Activated CD4-positive, alpha-beta T cell treated with anti-CD3 and anti-CD28 coated beads for 36 hours (primary cell): ENCODE measurements at regions of chr13 and their contacts with region 1.

Region 1: DNA sequence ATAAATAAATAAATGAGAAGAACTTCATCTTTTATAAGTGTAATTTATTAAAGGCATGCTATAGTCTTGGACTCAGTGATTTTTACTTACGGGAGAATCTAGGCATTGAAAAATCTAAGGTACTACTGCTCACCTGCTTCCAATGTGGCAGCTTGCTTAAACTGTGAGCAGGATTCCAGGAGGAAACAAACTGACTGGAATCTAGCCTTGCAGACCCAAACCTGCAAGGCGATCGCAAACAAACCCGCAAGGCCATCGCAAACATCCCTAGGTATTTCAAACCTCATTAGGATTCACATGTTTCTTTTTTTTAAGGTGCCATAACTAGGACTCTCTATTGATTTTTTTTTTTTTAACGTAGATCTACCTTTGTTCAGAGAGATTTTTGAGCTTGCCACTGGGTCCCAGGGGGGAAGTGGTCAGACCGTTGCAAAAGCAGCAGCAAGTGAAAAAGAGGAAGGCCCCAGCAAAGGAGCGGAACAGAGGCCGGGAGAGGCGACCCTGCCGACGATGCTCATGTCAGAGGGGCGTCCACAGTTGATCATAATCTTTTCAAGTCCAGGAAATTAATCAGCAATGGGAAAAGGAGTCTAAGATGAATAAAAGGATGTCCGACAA is 32.6 kb upstream of the FLT1 start:
- DNase-seq: no peak
- ATAC-seq: no peak
- H3K4me3 Mint-ChIP-seq: no peak overlapping the region
- H3K27ac Mint-ChIP-seq: no peak overlapping the region
- H3K4me1 Mint-ChIP-seq: peaks cover 25% of the 10 kb centered on the region
- H3K27me3 Mint-ChIP-seq: peaks cover 19% of the 10 kb centered on the region

Region 2: DNA sequence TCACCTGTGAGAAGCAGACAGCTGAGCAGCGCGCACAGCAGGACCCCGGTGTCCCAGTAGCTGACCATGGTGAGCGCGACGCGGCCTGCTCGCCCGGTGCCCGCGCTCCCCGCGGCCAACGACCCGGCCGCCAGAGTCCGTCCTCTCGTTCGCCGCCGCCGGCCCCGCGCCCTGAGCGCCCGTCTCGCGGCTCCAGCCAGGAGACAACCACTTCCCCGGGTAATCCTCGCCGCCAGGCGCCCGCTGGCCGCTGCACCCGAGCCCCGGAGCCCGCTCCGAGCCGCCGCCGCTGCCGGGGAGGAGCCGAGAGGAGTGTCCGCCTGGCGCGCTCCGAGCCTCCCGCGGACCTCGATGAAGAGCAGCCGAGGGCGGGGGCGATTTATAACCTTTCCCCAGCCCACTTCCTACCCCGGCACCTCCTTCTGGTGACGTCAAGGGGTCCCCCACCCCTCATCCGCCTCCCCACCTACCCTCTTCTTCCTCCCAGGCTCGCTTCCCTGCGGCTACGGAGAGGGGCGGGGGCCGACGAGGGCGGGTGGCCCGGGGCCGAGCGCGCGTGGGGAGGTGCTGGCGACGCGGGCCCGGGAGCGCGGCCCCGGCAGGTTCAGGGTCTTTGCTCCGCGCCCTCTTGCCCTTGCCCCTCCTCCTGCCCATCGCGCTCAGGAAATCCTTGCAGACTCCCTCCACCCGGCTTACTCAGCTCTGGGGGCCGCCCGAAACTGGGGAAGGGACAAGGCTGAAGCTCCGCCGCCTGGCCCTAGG is 32.6 kb before region 1 on chr13 and contains the start of gene FLT1:
- CTCF ChIA-PET with region 1: interaction called, 5 read pairs
- POLR2A ChIA-PET with region 1: no interaction called
- intact Hi-C with region 1: loop called (anchors 1 to 2 kb)
- DNase-seq: peak; percentile 69
- ATAC-seq: peak; percentile 55
- H3K4me3 Mint-ChIP-seq: peak within 1 kb of the TSS; percentile 76
- H3K27ac Mint-ChIP-seq: peak within 1 kb of the TSS; percentile 22
- H3K4me1 Mint-ChIP-seq: peaks cover 23% of the 10 kb centered on the region
- H3K27me3 Mint-ChIP-seq: peaks cover 35% of the 10 kb centered on the region
- total RNA-seq, gene FLT1: 21.7 to 27.4 TPM

Region 3: DNA sequence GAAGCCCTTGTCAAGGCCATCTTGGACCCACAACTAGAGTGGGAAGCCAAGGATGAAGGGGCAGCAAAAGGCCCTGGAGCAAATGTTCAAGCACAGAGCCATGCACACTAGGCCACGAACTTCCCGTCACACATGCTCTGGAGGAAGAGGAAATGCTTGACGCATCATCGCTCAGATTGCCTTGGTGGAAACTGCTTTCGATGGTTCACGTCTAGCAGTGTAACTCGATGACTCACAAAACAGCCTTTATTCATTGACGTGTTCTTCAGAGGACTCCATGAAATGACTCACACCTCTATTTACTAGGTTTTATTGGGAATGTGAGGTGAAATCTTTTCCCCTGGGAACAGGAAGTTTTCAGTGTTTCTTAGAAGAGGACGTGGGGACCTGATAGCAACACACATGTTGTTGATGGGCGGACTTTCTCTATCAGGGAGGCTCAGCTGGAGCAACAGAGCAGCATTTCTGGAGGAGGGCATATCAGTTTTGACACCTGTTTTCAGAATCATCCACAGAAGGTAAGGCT is 47.2 kb after region 1 on chr13:
- CTCF ChIA-PET with region 1: no interaction called
- POLR2A ChIA-PET with region 1: no interaction called
- intact Hi-C with region 1: loop called in 1 of 2 experiments (anchors 1 kb)
- DNase-seq: peak; percentile 69
- ATAC-seq: peak; percentile 98
- H3K4me3 Mint-ChIP-seq: no peak overlapping the region
- H3K27ac Mint-ChIP-seq: peak overlapping the region; percentile 90
- H3K4me1 Mint-ChIP-seq: peaks cover 15% of the 10 kb centered on the region
- H3K27me3 Mint-ChIP-seq: peaks cover 10% of the 10 kb centered on the region

Region 4: DNA sequence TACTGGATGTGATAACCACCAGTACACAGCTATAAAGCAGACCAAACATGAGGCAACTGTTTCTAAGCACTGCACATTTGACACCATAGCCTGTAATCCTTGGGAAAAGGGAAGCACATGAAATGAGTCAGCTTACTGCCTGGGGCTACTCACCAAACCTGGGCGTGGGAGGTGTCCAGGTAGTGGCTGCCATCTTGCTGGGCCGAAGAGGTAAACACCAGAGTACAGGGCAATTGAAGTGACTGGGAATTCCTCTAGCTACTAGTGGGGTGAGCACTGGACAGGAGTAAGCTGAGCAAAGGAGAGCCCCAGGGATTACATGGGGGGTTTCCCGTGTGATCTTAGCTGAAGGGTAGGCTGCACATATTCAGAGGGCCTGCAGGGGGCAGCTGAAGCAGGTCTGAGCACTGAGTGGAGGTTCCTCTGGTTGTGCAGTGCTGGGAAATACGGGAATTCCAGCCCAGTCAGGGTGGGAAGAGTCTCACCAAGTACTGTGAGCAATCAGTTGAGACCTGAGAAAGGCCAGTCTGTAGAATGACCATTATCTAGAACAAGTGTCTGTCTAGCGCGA is 927.5 kb after region 1 on chr13:
- CTCF ChIA-PET with region 1: no interaction called
- POLR2A ChIA-PET with region 1: no interaction called
- intact Hi-C with region 1: no loop called
- DNase-seq: peak; percentile 16
- ATAC-seq: peak; percentile 53
- H3K4me3 Mint-ChIP-seq: no peak overlapping the region
- H3K27ac Mint-ChIP-seq: no peak overlapping the region
- H3K4me1 Mint-ChIP-seq: no peaks in the 10 kb centered on the region
- H3K27me3 Mint-ChIP-seq: peaks cover 18% of the 10 kb centered on the region